Heart right ventricle (tissue), 16 donors: ENCODE measurements at regions of chr18 and their contacts with region 1.

Region 1: GRCh38 chr18:62610701-62611411 is 88.0 kb downstream of the ZCCHC2 start:
- DNase-seq: peak in 1 of 2 donors; percentile 55
- ATAC-seq: peak; percentile 25 to 70 (median 48)
- H3K4me3 ChIP-seq: peak overlapping the region in 9 of 10 donors; percentile 12 to 51 (median 41)
- H3K27ac ChIP-seq: peak overlapping the region in 8 of 10 donors; percentile 2 to 88 (median 70)
- H3K4me1 ChIP-seq: peaks cover 8 to 34% (median 22%) of the 10 kb centered on the region in 9 donors
- H3K27me3 ChIP-seq: peaks cover 0 to 9% (median 0%) of the 10 kb centered on the region in 7 donors
- CTCF ChIP-seq: no peak

Region 2: DNA sequence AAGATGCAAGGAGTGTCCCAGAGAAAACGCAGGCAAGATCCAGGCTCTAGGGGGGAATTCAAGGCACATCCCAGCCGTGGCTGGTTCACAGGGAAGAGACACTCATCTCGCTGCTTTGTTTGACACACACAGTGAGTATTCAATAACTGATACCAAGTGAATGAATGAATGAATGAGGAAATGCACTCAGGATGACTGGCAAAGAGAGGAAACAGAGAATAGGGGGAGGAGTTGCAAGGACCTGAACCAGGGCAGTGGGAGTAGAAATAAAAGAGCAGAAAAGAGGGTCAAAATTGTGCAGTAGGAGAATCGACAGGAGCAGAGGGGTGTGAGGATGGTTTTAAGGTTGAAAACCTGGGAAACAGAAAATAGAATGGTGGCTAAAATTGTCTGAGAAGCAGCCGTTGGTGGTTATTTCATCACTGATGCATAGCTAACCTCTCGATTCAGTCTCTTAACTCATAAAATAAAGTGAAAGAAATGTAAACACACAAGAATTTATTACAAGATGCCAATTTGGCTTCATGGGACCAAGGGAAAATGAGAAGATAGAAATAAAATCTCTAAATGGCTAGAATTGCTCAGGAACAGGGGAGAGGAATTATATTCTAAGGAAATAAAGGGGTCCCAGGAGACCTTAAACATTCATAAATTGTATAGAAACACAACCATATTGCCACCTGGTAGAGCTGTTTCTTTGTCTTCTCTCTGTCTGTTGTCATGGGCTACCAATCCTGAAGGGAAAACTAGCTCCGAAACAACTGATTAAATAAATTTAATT is 40.6 kb after region 1 on chr18:
- intact Hi-C with region 1: loop called in 1 of 10 experiments (anchors 10 kb)
- DNase-seq: no peak
- ATAC-seq: no peak
- H3K4me3 ChIP-seq: peak overlapping the region in 2 of 10 donors; percentile 2 to 7
- H3K27ac ChIP-seq: no peak overlapping the region
- H3K4me1 ChIP-seq: peaks cover 0 to 12% (median 0%) of the 10 kb centered on the region in 9 donors
- H3K27me3 ChIP-seq: no peaks in the 10 kb centered on the region
- CTCF ChIP-seq: no peak

Region 3: DNA sequence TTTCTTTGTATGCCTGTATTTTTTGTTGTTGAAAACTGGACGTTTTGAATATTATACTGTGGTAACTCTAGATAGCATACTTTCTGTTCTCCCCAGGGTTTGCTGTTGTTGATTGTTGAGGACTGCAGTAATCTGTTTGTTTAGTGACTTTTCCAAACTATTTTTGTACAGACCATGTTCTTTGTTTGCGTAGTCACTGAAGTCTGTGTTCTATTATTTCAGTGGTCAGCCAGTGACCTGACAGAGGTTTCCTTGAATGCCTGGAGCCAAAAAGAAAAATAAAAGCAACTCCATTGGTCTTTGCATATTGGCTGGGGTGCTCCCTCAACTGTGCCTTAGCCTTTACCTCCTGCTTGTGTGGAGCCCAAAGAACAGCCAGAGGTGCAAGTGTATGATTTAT is 61.7 kb after region 1 on chr18:
- intact Hi-C with region 1: no loop called
- DNase-seq: no peak
- ATAC-seq: peak in 1 of 8 donors; percentile 37
- H3K4me3 ChIP-seq: no peak overlapping the region
- H3K27ac ChIP-seq: no peak overlapping the region
- H3K4me1 ChIP-seq: no peaks in the 10 kb centered on the region
- H3K27me3 ChIP-seq: no peaks in the 10 kb centered on the region
- CTCF ChIP-seq: no peak

Region 4: DNA sequence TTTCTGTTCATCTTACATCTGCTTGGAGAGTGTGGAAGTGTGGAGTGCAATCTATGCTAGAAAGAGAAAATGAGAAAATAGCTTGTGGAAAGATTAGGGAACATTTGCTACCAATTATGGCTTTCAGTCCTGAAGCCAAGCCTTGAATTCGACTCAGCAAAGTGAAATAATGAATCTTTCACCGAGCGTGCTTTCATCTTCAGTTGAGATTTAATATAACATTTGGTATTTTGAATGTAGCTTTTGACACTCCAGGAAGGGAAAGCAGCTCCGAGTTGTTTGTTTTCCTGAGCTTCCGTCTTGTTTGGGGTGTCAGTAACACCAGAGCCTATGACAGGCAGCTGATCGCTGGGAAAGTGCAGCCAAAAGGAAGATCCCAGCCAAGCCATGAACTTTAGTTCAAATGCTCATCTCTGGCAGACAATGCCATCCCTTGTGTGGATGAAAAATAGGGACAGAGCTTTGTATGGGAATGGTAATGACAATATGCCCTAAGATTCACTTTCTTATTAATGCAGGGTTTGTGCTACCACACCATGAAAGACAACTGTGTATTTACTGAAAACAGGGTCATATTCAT is 79.5 kb after region 1 on chr18:
- intact Hi-C with region 1: loop called in 1 of 10 experiments (anchors 10 kb)
- DNase-seq: no peak
- ATAC-seq: no peak
- H3K4me3 ChIP-seq: no peak overlapping the region
- H3K27ac ChIP-seq: no peak overlapping the region
- H3K4me1 ChIP-seq: no peaks in the 10 kb centered on the region
- H3K27me3 ChIP-seq: no peaks in the 10 kb centered on the region
- CTCF ChIP-seq: no peak

Region 5: GRCh38 chr18:63378919-63379638 is 768.2 kb after region 1 on chr18:
- intact Hi-C with region 1: loop called in 1 of 10 experiments (anchors 10 kb)
- DNase-seq: no peak
- ATAC-seq: no peak
- H3K4me3 ChIP-seq: no peak overlapping the region
- H3K27ac ChIP-seq: no peak overlapping the region
- H3K4me1 ChIP-seq: peaks cover 0 to 10% (median 0%) of the 10 kb centered on the region in 9 donors
- H3K27me3 ChIP-seq: no peaks in the 10 kb centered on the region
- CTCF ChIP-seq: no peak